Activated B cell treated with CpG ODN at 0.5 μM for 24 hours (primary cell): ENCODE measurements at regions of chr17 and their contacts with region 1.

Region 1: DNA sequence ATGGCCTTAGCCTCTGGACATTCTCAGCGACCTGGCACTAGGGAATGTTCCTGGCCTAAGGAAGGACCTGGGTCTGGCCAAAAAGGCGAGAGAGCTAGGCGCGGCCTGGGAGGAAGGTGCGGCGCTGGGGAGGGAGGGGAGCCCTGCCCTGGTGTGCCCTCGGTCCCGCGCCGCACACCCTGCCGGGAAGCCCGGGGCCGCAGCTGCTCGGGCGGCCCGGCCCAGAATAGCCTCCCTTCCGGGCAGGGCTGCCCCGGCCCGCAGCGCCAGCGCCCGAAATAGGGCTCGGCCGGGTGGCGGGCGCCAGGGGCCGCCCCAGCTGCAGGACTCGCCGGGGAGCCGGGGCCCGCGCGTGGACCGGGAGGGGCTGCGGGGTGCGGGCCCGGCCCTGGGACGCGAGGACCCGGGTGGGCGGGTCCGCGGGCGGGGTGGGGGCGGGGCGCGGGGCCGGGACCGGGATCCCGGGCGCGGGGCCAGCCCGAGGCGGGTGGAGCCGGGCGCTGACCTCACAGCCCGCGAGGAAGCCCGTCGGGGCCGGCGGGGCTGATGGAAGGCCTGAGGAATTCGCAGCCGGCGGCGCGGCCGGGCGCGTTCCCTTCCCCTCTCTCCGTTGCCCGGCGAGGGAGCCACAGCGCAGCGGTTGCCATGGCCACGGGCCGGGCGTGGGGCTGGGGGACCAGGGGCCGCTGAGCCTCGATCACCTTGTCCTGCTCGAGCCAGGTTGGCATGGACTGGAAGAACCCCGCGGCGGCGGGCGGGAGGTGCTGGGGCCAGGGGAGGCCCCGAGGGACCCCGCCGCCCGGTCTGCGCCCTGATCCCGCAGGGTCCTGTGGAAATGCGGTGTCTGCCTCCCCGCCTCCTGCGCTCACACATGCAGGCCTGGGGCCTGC is 18.1 kb downstream of the SOCS3 start:
- DNase-seq: peak; percentile 48
- ATAC-seq: no peak
- H3K4me3 Mint-ChIP-seq: peak overlapping the region; percentile 79
- H3K27ac Mint-ChIP-seq: peak overlapping the region; percentile 70
- H3K4me1 Mint-ChIP-seq: peaks cover 85% of the 10 kb centered on the region
- H3K27me3 Mint-ChIP-seq: no peaks in the 10 kb centered on the region
- CTCF ChIP-seq: no peak

Region 2: GRCh38 chr17:78133971-78134898 is 207.6 kb before region 1 on chr17:
- CTCF ChIA-PET with region 1: no interaction called
- POLR2A ChIA-PET with region 1: interaction called, 3 read pairs
- intact Hi-C with region 1: loop called (anchors 5 kb)
- DNase-seq: peak; percentile 59
- ATAC-seq: peak; percentile 15
- H3K4me3 Mint-ChIP-seq: peak overlapping the region; percentile 95
- H3K27ac Mint-ChIP-seq: peak overlapping the region; percentile 81
- H3K4me1 Mint-ChIP-seq: peaks cover 87% of the 10 kb centered on the region
- H3K27me3 Mint-ChIP-seq: no peaks in the 10 kb centered on the region
- CTCF ChIP-seq: peak; percentile 69

Region 3: DNA sequence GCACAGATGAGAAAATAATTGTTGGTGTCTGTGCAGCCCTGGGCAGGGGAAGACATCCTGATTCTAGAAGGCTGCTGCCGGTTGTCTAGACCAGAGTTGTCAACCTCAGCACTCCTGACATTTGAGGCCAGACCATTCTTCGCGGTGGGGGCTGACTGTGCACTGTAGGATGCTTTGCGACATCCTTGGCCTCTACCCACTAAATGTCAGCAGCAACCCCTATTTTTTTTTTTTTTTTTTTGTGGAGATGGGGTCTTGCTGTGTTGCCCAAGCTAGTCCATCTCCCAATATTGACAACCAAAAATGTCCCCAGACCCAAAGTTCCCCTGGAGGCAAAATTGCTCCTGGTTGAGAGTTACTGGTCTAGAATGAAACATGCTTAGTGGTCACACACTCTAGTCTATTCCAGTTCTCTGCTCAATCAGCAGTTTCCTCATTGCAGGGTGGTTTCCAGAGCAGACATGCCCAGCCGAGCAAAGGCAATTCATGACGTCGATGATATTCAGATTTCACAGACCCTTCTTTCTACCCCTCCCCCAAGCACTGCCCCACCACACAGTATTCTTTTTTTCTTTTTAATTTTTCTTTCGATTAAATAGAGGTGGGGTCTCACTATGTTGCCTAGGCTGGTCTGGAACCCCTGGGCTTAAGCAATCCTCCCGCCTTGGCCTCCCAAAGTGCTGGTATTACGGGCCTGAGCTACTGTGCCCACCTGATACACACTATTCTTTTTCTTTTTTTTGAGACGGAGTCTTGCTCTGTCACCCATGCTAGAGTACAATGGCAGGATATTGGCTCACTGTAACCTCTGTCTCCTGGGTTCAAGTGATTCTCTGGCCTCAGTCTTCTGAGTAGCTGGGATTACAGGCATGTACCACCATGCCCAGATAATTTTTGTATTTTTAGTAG is 186.6 kb before region 1 on chr17:
- CTCF ChIA-PET with region 1: no interaction called
- POLR2A ChIA-PET with region 1: interaction called, 10 read pairs
- intact Hi-C with region 1: no loop called
- DNase-seq: no peak
- ATAC-seq: peak; percentile 74
- H3K4me3 Mint-ChIP-seq: peak overlapping the region; percentile 72
- H3K27ac Mint-ChIP-seq: peak overlapping the region; percentile 97
- H3K4me1 Mint-ChIP-seq: peaks cover 82% of the 10 kb centered on the region
- H3K27me3 Mint-ChIP-seq: no peaks in the 10 kb centered on the region
- CTCF ChIP-seq: no peak

Region 4: DNA sequence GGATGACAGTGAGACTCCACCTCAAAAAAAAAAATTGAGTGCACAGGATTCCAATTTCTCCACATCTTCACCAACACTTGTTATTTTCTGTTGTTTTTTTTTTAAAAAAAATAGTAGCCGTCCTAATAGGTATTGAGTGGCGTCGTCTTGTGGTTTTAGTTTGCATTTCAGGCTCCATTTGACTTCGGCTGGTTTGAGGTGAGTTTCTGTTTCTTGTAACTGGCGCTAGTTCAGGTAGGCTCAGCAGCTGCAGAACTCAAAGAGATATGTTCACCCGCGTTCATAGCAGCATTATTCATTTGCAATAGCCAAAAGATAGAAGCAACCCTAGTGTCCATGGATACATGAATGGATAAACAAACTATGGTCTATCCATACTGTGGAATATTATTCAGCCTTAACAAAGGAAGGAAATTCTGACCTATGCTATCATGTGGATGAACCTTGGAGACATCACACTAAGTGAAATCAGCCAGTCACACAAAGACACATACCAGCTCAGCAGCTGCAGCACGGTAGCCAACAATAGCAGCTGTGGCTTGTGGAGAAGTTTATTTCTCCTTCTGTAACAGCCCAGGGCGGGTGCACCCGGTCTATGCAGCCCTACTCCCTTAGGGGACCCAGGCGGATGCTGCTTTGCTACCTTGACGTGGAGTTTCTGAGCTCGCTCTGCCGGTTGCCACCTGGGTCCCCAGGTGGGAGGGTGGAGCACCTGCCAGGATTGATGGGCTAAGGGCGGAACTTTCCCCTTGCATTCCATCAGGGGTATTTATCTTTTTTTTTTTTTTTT is 65.5 kb before region 1 on chr17:
- CTCF ChIA-PET with region 1: no interaction called
- POLR2A ChIA-PET with region 1: interaction called, 10 read pairs
- intact Hi-C with region 1: no loop called
- DNase-seq: peak; percentile 30
- ATAC-seq: peak; percentile 78
- H3K4me3 Mint-ChIP-seq: peak overlapping the region; percentile 38
- H3K27ac Mint-ChIP-seq: peak overlapping the region; percentile 65
- H3K4me1 Mint-ChIP-seq: peaks cover 42% of the 10 kb centered on the region
- H3K27me3 Mint-ChIP-seq: peaks cover 12% of the 10 kb centered on the region
- CTCF ChIP-seq: no peak

Region 5: DNA sequence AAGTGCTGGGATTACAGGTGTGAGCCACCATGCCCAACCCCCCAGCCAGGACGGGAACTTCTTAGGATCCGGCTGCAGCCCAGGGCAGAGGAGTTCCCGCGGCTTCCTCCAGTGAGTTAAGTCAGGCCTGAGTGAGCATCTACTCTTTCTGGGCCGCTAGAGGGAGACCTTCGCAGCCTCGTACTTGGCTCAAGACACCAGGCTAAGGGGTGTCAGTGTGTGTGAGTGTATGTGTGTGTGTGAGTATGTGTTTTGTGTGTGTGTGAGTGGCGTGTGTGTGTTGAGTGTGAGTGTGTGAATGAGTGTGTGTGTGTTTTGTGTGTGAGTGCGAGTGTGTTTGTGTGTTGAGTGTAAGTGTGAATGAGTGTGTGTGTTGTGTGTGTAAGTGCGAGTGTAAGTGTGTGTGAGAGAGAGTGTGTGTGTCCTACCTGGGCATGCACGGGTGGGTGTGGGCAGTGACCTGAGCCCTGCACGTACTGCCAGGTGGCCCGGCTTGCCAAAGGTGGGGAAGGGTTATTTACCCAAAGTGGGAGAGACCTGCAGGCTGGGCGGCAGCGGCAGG is 51.9 kb before region 1 on chr17:
- CTCF ChIA-PET with region 1: no interaction called
- POLR2A ChIA-PET with region 1: interaction called, 9 read pairs
- intact Hi-C with region 1: loop called (anchors 5 kb)
- DNase-seq: peak; percentile 61
- ATAC-seq: peak; percentile 99
- H3K4me3 Mint-ChIP-seq: no peak overlapping the region
- H3K27ac Mint-ChIP-seq: no peak overlapping the region
- H3K4me1 Mint-ChIP-seq: peaks cover 3% of the 10 kb centered on the region
- H3K27me3 Mint-ChIP-seq: no peaks in the 10 kb centered on the region
- CTCF ChIP-seq: no peak

Region 6: DNA sequence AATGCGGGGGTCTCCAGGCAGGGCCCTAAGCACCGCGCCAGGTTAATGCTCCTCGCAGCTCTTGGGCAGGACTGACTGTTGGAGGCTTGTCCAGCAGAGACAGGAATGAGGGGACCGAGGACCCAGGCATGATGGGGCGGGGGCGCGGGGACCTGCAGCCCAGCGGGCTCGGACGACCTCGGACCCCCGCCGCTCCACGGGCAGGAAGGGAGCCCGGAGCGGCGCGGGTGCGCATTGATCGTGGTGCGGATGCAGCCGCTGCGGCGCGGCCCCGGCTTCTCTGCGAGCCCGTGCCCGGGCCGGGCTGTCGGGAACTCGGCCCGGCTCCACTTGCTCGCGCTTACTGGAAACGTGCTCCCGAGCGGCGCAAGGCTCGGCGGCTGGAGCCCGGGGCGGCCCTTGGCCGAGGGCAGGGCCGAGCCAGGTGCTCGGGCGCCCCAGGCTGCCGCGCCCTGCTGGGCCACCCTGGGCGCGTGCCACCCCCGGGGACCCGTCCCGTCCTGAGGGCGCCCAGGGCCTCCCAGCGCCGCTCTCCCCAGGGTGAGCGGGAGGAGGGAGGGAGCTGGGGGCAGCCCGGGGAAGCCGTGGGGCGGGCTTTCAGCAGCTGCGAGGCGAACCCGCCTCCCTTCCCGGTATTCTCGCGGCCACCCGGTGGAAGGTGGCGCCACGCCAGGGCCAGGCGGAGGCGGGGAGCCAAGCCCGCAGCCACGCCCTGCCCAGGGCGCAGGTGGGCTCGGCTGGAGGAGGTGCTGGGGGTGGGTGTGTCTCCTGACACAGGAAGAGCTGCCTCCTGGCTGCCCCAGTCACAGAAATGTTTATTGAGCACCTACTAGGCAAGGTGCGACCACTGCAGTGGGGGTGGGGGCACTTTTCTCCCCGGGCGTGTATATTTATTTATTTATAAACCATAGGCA is 27.8 kb before region 1 on chr17:
- CTCF ChIA-PET with region 1: interaction called, 3 read pairs
- POLR2A ChIA-PET with region 1: interaction called, 21 read pairs
- intact Hi-C with region 1: loop called (anchors 1 kb)
- DNase-seq: peak; percentile 65
- ATAC-seq: peak; percentile 78
- H3K4me3 Mint-ChIP-seq: peak overlapping the region; percentile 66
- H3K27ac Mint-ChIP-seq: peak overlapping the region; percentile 24
- H3K4me1 Mint-ChIP-seq: peaks cover 43% of the 10 kb centered on the region
- H3K27me3 Mint-ChIP-seq: peaks cover 6% of the 10 kb centered on the region
- CTCF ChIP-seq: no peak

Region 7: DNA sequence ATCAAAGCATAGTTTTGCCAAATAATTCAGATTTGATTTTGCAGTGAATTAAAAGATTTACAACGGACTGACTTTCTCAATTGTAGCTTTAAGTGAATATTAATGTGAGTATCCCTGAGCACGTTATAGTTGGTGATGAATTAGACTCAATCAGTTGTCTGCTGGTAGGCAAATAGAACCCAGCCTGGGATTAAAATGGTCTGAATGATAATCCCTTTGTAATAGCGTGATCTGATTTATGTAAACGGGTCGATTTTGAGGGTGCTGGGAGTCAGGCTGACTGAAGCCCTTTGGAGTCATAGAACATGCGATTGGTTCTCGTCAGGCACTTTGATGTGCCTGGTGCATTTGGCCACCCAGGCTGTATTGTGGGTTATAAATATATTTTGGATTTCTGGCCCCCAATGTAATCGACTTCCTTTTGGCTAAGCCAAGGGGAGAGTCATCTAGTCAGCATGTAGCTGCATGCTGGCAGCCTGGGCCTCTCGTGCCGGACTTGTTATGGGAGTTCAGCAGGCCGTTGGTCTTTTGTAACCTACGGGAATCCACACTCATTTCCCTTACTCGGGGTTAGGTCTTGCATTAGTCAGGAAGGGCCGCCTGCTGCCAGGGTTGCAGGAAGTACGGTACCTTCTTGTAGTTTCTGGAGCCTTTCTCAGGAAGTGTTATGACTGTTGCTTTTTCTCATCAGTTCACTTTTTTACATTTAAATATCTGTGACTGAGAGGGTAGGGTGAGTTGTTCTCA is 42.1 kb after region 1 on chr17:
- CTCF ChIA-PET with region 1: no interaction called
- POLR2A ChIA-PET with region 1: interaction called, 3 read pairs
- intact Hi-C with region 1: loop called (anchors 1 kb)
- DNase-seq: no peak
- ATAC-seq: peak; percentile 30
- H3K4me3 Mint-ChIP-seq: peak overlapping the region; percentile 64
- H3K27ac Mint-ChIP-seq: peak overlapping the region; percentile 84
- H3K4me1 Mint-ChIP-seq: peaks cover 91% of the 10 kb centered on the region
- H3K27me3 Mint-ChIP-seq: no peaks in the 10 kb centered on the region
- CTCF ChIP-seq: no peak

Region 8: GRCh38 chr17:78432226-78433012 is 90.6 kb after region 1 on chr17:
- CTCF ChIA-PET with region 1: no interaction called
- POLR2A ChIA-PET with region 1: no interaction called
- intact Hi-C with region 1: no loop called
- DNase-seq: no peak
- ATAC-seq: no peak
- H3K4me3 Mint-ChIP-seq: no peak overlapping the region
- H3K27ac Mint-ChIP-seq: no peak overlapping the region
- H3K4me1 Mint-ChIP-seq: peaks cover 2% of the 10 kb centered on the region
- H3K27me3 Mint-ChIP-seq: peaks cover 2% of the 10 kb centered on the region
- CTCF ChIP-seq: no peak